ENCODE measurements at regions of chr5 and their contacts with region 1.

Region 1: DNA sequence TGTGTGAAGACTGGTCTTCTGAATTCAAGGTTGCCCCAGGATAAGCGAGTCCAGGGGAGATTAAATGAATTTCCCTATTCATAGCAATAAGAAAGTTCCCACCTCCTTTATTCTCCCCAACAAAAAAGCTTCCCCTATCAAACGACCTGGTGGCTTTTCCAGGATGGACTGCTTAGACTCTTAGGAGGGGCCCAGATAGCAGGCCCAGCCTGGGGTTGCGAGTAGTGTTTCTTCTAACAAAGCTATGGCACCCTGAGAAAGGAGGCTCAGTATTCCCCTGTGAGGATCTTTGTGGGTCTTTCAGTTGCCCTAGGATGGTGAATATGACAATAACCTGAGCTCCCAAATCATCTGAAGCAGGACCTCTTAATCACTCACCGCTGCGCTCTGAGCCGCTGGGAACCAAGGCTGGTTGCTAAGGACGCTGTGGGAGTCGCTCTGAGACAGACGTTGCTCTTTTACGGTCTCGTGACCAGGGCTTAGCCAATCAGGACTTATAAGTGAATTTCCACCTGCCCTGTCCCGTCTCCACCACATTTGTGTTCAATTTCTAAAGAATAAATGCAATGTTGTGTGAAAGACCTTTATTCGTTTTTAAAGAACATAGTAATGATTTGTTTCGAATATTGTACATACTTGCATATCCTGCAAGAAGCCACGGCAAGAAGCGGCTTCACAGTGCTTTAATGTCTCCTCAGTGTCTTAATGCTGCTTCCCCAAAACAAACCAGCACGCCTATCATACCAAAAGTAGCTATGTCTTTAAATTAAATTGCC is at the start of gene TMEM232:
- DNase-seq: peak; percentile 50 to 90
- ATAC-seq: peak; percentile 88 to 99 (median 98)
- H3K4me3 ChIP-seq: peak within 1 kb of the TSS; percentile 22
- H3K4me3 Mint-ChIP-seq: peak within 1 kb of the TSS; percentile 94
- H3K27ac ChIP-seq: no peak within 1 kb of the TSS
- H3K27ac Mint-ChIP-seq: peak within 1 kb of the TSS; percentile 57 to 69
- H3K4me1 ChIP-seq: peaks cover 4% of the 10 kb centered on the region
- H3K4me1 Mint-ChIP-seq: peaks cover 5 to 6% of the 10 kb centered on the region in 2 donors
- H3K27me3 ChIP-seq: no peaks in the 10 kb centered on the region
- H3K27me3 Mint-ChIP-seq: peaks cover 5 to 28% of the 10 kb centered on the region in 2 donors
- CTCF ChIP-seq: no peak
- total RNA-seq, gene TMEM232: 0.45 to 3.0 (median 0.66) TPM

Region 2: DNA sequence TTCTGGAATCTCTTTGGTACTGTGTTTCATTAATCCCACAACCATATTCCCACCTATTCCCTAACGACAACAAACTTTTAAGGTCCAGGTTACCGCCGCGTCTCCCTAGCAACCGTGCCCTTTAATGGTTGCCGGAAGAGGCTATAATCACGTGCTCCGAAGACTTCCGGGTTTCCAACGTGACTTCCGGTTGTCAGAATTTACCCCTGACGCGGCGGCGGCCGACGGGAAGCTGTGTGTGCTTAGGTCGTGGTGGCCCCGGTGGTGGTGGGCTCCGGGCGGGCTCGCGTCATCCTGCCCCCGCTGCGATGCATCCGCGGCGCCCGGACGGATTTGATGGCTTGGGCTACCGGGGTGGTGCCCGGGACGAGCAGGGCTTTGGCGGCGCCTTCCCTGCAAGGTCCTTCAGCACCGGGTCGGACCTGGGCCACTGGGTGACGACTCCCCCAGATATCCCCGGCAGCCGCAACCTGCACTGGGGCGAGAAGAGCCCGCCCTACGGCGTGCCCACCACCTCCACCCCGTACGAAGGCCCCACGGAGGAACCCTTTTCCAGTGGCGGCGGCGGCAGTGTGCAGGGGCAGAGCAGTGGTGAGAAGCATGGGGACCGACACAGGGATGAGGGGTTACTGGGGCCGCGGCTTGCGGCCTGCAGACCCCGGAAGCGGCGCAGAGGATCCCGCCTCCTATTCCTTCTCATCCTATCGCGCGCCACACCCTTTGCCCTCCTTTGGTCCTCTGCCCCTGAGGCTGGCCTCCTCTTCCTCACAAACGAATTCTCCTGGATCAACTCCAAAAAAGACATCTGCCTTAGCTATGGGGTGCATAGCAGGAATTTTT is 12.6 kb after region 1 on chr5 and contains the start of gene SLC25A46:
- intact Hi-C with region 1: loop called (anchors 1 kb)
- DNase-seq: peak; percentile 84 to 96
- ATAC-seq: peak; percentile 77 to 90 (median 87)
- H3K4me3 ChIP-seq: peak within 1 kb of the TSS; percentile 87
- H3K4me3 Mint-ChIP-seq: peak within 1 kb of the TSS; percentile 97
- H3K27ac ChIP-seq: peak within 1 kb of the TSS; percentile 88
- H3K27ac Mint-ChIP-seq: peak within 1 kb of the TSS; percentile 96 to 97
- H3K4me1 ChIP-seq: peaks cover 10% of the 10 kb centered on the region
- H3K4me1 Mint-ChIP-seq: peaks cover 27 to 36% of the 10 kb centered on the region in 2 donors
- H3K27me3 ChIP-seq: peaks cover 3% of the 10 kb centered on the region
- H3K27me3 Mint-ChIP-seq: peaks cover 7 to 14% of the 10 kb centered on the region in 2 donors
- CTCF ChIP-seq: no peak
- total RNA-seq, gene SLC25A46: 25.5 to 35.4 (median 34.5) TPM